ENCODE measurements at regions of chr6 and their contacts with region 1.

Region 1: GRCh38 chr6:24581084-24581669 is 64.8 kb downstream of the KIAA0319 start:
- DNase-seq: peak; percentile 76 to 89
- ATAC-seq: peak; percentile 88
- H3K4me3 ChIP-seq: no peak overlapping the region
- H3K27ac ChIP-seq: no peak overlapping the region
- H3K4me1 ChIP-seq: peaks cover 0 to 4% of the 10 kb centered on the region in 2 donors
- H3K27me3 ChIP-seq: no peaks in the 10 kb centered on the region

Region 2: GRCh38 chr6:24689964-24690363 is 108.8 kb after region 1 on chr6:
- intact Hi-C with region 1: loop called (anchors 2 kb)
- DNase-seq: no peak
- ATAC-seq: no peak
- H3K4me3 ChIP-seq: no peak overlapping the region
- H3K27ac ChIP-seq: no peak overlapping the region
- H3K4me1 ChIP-seq: no peaks in the 10 kb centered on the region
- H3K27me3 ChIP-seq: no peaks in the 10 kb centered on the region

Region 3: DNA sequence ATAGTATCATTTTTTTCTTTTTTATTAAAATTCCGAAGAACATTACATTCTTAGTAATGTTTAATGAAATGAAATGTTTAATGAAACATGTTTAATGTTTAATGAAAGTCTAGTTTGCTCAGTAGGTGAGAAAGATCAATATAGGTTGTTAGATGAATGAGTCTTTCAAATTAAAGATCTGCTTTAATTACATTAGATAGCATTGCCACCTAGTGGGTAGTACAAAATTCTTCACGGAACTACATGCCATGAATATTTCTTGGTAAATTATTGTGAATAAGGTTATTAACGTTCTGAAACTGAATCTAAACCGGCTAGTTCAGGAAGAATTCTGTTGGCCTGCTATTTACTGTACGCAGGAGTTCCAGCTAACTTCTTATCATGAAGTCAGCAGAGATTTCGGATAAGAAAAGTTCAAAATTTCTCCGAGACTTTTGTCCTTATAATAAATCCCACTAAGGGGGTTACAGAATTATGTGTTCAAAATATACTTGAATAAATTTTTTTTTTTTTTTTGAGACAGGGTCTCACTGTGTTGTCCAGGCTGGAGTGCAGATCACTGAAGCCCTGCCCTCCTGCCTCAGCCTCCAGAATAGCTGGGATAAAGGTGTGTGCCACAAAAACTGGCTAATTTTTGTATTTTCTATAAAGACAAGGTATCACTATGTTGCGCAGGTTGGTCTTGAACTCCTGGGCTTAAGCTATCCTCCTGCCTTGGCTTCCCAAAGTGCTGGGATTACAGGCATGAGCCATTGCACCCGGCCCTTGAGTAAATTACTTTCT is 185.7 kb after region 1 on chr6:
- intact Hi-C with region 1: loop called (anchors 5 kb)
- DNase-seq: no peak
- ATAC-seq: no peak
- H3K4me3 ChIP-seq: no peak overlapping the region
- H3K27ac ChIP-seq: no peak overlapping the region
- H3K4me1 ChIP-seq: no peaks in the 10 kb centered on the region
- H3K27me3 ChIP-seq: no peaks in the 10 kb centered on the region

Region 4: DNA sequence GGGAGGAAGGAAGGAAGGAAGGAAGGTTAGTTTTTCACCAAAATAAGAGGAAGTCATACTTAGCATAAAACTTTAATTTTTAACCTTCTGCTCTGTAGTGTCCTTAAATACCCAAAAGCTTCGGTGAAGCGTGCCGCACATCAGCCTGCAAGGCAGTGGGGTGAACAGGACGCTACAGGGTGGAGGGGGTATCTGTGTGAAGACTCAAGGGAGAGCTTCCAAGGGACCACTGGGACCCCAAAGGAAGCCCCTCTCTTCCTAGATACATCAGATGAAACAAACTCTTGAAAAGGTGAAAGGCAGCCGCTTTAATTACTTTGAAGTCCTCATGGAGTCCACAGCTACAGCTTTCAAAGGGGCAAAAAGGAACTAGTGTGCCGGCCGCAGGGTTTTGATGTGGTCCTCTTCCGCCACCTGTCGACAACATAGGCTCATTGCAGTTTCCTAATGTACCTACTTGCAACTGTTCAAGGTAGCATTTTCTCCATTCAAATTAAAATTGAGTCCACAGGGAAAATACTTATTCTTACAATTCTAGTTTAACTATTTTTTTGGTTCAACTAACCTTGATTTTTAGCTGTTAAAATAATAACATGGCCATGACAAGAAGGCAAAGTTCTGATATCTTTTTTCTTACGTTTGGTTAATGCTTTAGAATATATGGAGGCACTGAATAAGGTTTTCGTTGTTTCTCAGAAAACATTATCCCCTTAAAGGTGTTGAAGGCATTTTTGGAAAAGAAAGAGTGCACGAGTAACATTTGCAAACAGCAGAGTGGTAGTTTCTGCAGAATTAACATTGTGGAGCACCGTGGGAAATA is 489.6 kb after region 1 on chr6:
- intact Hi-C with region 1: loop called (anchors 5 to 10 kb)
- DNase-seq: peak; percentile 78 to 84
- ATAC-seq: peak; percentile 93
- H3K4me3 ChIP-seq: no peak overlapping the region
- H3K27ac ChIP-seq: no peak overlapping the region
- H3K4me1 ChIP-seq: no peaks in the 10 kb centered on the region
- H3K27me3 ChIP-seq: no peaks in the 10 kb centered on the region

Measured in aorta (tissue), 5 donors.